ENCODE measurements at regions of chr7 and their contacts with region 1.

Region 1: GRCh38 chr7:2821161-2821841 is 22.8 kb downstream of the GNA12 start:
- DNase-seq: peak; percentile 67
- H3K4me3 ChIP-seq: no peak overlapping the region
- H3K27ac ChIP-seq: peak overlapping the region; percentile 83
- H3K4me1 ChIP-seq: peaks cover 22% of the 10 kb centered on the region
- H3K27me3 ChIP-seq: no peaks in the 10 kb centered on the region
- CTCF ChIP-seq: no peak
- POLR2A ChIP-seq: no peak

Region 2: DNA sequence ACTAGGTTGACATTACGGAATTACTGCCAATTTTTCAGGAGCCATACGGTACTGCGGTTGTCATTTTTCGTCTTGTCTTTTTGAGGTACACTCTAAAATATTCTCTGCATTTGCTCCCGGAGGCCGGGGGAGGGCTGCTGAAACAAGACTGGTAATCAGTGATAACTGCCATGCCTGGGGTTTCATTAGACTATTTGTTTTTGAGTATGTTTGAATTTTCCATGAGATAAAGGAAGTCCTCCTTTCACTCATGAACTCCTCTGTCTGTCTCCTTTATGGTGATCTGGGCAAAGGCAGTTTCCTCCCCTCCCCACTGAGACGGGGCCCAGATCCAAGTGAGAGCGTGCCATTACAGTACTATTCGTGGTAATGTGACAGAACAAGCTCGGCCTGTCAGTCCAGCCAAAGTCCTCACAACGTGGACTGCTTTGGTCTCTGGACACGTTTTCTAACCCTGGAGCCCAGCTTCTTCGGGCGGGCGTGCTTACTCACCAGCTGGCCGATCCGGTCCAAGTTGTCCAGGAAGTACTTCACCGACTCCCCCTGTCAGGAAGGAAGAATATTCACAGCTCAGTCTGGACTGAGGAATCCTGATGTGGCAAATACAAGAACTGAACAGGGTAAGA is 88.2 kb before region 1 on chr7:
- CTCF ChIA-PET with region 1: interaction called, 3 read pairs
- POLR2A ChIA-PET with region 1: no interaction called
- dilution Hi-C with region 1: no loop called
- intact Hi-C with region 1: loop called (anchors 1 kb)
- DNase-seq: peak; percentile 81
- H3K4me3 ChIP-seq: no peak overlapping the region
- H3K27ac ChIP-seq: peak overlapping the region; percentile 54
- H3K4me1 ChIP-seq: peaks cover 33% of the 10 kb centered on the region
- H3K27me3 ChIP-seq: no peaks in the 10 kb centered on the region
- CTCF ChIP-seq: no peak
- POLR2A ChIP-seq: no peak

Region 3: DNA sequence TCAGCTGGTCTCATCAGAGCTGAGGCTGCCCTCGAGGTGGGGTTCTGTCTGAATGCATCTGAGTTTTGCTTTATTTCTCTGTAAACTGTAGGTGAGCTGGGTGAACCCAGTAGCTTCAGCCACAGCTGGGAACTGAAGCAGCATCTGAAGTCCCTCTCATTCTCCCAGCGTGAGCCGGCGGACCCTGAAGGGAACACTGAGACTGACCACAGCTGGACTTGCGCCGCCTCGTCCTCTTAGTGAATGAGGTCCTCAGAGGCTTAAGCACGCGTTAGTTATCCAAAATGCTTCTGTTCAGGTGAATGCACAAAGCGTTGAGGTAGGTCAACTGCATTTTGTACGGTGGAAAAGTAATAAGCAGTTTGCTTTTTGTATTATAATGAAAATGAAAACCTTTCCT is 56.7 kb before region 1 on chr7:
- CTCF ChIA-PET with region 1: interaction called, 10 read pairs
- POLR2A ChIA-PET with region 1: no interaction called
- dilution Hi-C with region 1: no loop called
- intact Hi-C with region 1: loop called (anchors 2 kb)
- DNase-seq: no peak
- H3K4me3 ChIP-seq: no peak overlapping the region
- H3K27ac ChIP-seq: no peak overlapping the region
- H3K4me1 ChIP-seq: peaks cover 11% of the 10 kb centered on the region
- H3K27me3 ChIP-seq: no peaks in the 10 kb centered on the region
- CTCF ChIP-seq: no peak
- POLR2A ChIP-seq: no peak

Region 4: DNA sequence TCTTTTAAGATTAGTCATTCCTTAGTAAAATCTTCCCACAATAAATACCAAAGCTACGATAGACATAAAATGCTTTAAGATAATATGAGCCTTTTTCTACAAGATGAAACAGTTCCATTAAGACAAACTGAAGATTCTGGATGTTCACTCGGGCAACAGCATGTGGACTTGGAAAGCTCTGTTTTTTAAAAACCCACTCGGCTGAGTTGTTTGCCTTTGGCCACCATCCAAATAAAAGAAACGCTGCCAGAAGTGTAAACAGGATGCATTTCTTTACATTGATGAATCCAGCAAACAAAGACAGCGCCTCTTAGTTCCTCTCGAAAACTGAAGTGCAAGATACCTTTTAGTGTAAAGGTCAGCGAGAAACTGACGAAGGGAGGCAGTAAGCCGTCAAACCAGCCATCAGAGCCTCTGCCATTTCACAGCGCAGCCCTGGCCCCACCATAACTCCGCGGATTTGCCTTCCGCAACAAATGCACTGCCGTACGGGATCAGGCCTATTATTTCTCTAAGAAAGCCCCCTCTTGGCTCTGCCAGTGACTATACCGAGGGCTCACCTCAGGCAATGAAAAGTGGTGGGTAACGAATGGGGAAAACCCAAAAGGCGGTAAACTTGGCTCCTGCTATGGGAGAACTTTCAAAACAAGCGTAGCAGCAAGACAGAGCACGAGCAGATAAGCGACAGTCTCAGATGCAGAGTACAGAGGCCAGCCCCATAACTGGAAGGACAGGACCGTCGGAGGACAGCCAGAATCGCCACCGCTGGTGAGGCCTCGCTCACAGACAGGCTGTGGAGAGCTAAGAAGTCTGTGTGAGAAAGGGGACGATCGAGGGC is 18.6 kb before region 1 on chr7:
- CTCF ChIA-PET with region 1: interaction called, 6 read pairs
- POLR2A ChIA-PET with region 1: interaction called, 4 read pairs
- dilution Hi-C with region 1: no loop called
- intact Hi-C with region 1: loop called (anchors 1 kb)
- DNase-seq: peak; percentile 65
- H3K4me3 ChIP-seq: no peak overlapping the region
- H3K27ac ChIP-seq: peak overlapping the region; percentile 40
- H3K4me1 ChIP-seq: peaks cover 22% of the 10 kb centered on the region
- H3K27me3 ChIP-seq: no peaks in the 10 kb centered on the region
- CTCF ChIP-seq: no peak
- POLR2A ChIP-seq: no peak

Region 5: DNA sequence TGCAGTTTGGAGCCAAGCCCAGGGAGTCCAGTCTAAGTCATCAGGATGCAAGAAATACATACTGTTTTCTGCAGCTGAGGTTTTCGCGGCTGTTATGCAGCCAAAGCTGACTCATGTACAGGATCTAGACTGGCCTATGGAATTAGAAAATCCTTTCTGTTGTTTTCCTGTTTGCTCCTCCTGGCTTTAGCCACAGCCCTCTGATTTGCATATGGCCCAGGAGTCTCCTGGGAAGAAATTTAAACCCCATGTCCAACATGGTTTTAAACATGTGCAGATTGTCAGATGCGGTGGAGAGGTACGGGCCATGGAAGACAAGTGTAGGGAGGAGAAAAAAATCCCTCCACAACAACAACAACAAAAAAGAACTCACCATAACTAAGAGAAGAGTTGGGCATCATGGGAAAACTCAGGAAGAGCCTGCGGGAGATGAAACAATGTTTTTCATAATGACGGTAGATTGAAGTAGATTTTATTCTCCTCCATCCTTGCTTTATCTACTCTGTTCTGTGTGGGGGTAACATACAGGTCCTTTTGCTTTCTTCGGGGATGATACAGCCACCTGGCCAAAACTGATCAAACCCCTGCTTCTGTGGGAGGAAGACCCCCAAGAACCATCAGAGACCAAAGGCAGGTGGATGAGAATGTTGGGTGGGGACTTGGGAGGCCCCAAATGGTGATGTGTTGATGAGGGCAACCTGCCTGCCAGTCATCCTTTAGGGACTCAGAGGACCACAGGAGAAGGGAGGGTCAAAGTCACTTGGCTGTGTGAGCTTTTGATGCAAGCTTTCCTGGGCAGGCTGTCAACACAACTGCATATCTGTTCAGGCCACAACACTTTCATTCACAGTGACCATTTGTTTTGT is 52.6 kb after region 1 on chr7:
- CTCF ChIA-PET with region 1: no interaction called
- POLR2A ChIA-PET with region 1: no interaction called
- dilution Hi-C with region 1: no loop called
- intact Hi-C with region 1: no loop called
- DNase-seq: peak; percentile 91
- H3K4me3 ChIP-seq: no peak overlapping the region
- H3K27ac ChIP-seq: peak overlapping the region; percentile 99
- H3K4me1 ChIP-seq: peaks cover 18% of the 10 kb centered on the region
- H3K27me3 ChIP-seq: no peaks in the 10 kb centered on the region
- CTCF ChIP-seq: no peak
- POLR2A ChIP-seq: peak; percentile 100

Region 6: GRCh38 chr7:2954433-2954853 is 133.1 kb after region 1 on chr7:
- CTCF ChIA-PET with region 1: no interaction called
- POLR2A ChIA-PET with region 1: no interaction called
- dilution Hi-C with region 1: no loop called
- intact Hi-C with region 1: no loop called
- DNase-seq: no peak
- H3K4me3 ChIP-seq: no peak overlapping the region
- H3K27ac ChIP-seq: no peak overlapping the region
- H3K4me1 ChIP-seq: peaks cover 8% of the 10 kb centered on the region
- H3K27me3 ChIP-seq: no peaks in the 10 kb centered on the region
- CTCF ChIP-seq: no peak
- POLR2A ChIP-seq: no peak

Region 7: GRCh38 chr7:3042861-3043489 is 221.7 kb after region 1 on chr7:
- CTCF ChIA-PET with region 1: no interaction called
- POLR2A ChIA-PET with region 1: no interaction called
- dilution Hi-C with region 1: no loop called
- intact Hi-C with region 1: no loop called
- DNase-seq: no peak
- H3K4me3 ChIP-seq: peak overlapping the region; percentile 61 to 71 (median 63)
- H3K27ac ChIP-seq: no peak overlapping the region
- H3K4me1 ChIP-seq: peaks cover 3% of the 10 kb centered on the region
- H3K27me3 ChIP-seq: no peaks in the 10 kb centered on the region
- CTCF ChIP-seq: no peak
- POLR2A ChIP-seq: no peak

Region 8: DNA sequence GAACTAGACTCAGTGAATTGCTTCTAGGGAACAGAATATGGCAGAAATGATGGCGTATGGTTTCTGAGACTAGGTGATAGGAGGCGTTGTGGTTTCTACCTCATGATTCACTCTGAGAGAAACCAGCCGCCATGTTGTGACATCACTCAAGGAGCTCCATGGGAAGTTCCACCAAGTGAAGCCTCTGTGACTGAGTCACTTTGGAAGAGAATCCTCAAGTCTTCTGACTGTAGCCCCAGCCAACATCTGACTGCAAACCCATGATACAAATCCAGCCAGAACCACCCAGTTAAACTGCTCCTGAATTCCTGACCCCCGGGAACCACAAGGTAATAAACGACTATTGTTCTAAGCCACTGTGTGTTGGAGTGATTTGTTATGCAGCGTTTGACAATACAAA is 313.4 kb after region 1 on chr7:
- CTCF ChIA-PET with region 1: no interaction called
- POLR2A ChIA-PET with region 1: no interaction called
- dilution Hi-C with region 1: no loop called
- intact Hi-C with region 1: no loop called
- DNase-seq: no peak
- H3K4me3 ChIP-seq: no peak overlapping the region
- H3K27ac ChIP-seq: no peak overlapping the region
- H3K4me1 ChIP-seq: no peaks in the 10 kb centered on the region
- H3K27me3 ChIP-seq: no peaks in the 10 kb centered on the region
- CTCF ChIP-seq: no peak
- POLR2A ChIP-seq: no peak

Measured in endothelial cell of umbilical vein (primary cell).